Activated T-helper 1 cell treated with anti-CD3 and anti-CD28 coated beads, Interleukin-12 subunit alpha, Interleukin-12 subunit beta, Interleukin-2, Interleukin-4 antibody, amounts not matched to agents 30 ng/mL and 10 ng/mL and 1 ng/mL, durations not matched to agents 14 hours and 24 hours and 36 hours (primary cell): ENCODE measurements at regions of chr12 and their contacts with region 1.

Region 1: DNA sequence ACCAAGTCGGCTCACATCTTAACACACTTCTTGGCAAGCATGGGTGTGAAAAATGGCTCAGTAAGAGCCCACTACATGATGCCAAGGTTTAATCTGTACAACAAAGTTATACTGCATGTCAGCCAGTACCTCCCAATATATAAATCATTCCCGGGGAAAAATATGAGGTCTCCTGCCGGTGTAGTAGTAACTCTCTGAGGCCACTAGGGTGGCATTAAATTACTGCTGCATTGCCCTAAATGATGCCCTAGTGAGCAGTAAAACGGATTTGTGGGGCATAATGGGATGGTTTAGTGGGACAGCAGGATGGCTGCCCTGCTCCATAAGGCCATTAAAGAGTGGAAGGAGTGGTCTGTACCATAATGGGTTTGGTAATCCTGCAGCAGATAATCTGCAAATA is 267.7 kb downstream of the MED13L start:
- DNase-seq: no peak
- H3K4me3 Mint-ChIP-seq: no peak overlapping the region
- H3K27ac Mint-ChIP-seq: no peak overlapping the region
- H3K4me1 Mint-ChIP-seq: no peaks in the 10 kb centered on the region
- H3K27me3 Mint-ChIP-seq: no peaks in the 10 kb centered on the region

Region 2: DNA sequence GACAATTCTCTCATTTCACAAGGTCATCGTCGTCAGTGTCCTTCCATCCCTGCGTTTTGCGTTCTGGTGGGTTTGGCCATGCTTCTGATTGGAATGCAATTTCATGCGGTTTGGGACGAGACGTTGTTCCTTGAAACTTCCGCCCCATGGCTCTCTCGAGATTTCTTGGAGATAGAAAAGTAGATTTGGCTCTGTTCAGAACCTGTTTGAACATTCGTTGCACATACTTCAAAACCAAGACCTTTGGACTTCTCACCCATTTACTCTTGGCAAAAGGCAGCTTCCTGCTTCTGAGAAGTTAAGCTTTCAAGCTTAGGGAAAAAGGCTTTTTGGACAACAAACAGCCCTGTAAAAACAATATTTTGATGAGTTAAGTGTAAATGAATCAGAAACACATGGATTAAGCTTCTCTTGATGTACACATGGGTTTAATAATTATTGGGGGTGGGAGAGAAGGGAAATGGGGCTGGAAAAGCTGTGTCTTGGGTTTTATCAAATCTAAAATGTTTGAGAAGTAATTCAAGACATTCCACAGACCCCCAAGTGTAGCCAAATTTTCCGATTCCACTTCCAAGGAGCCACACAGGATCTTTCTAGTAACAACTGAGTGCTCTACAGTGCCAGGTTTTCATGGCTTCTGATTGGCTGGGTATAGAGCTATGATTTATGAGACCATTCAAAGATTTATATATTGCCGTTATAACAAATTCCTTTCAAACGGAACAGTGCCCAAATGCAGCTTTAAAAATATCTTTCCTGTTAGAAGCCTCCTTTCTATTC is 199.5 kb before region 1 on chr12:
- intact Hi-C with region 1: no loop called
- DNase-seq: no peak
- H3K4me3 Mint-ChIP-seq: no peak overlapping the region
- H3K27ac Mint-ChIP-seq: no peak overlapping the region
- H3K4me1 Mint-ChIP-seq: no peaks in the 10 kb centered on the region
- H3K27me3 Mint-ChIP-seq: no peaks in the 10 kb centered on the region

Region 3: DNA sequence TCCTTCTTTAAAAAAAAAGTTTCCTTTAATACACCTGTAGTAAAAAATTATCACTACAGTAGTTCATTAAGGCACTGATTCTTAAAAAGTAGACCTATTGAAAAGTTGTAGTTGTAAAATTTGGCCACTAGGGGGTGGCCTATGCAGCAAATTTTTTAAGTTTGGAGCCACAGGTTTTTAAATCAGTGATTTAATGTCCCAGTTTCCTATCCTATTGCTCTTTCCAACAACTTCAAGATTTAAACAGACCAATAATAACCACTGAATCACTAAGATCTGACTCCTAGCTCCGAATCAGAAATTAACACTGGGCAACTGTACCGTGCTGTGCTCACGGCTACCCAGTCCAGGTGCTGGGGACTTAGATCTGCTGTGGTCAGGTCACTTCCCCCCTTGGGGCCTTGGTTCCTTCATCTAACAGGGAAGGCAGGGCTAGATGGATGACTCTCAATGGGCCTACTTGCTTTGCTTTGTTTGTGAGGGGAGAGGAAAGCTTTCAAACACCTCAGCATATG is 11.6 kb before region 1 on chr12:
- intact Hi-C with region 1: no loop called
- DNase-seq: no peak
- H3K4me3 Mint-ChIP-seq: no peak overlapping the region
- H3K27ac Mint-ChIP-seq: no peak overlapping the region
- H3K4me1 Mint-ChIP-seq: no peaks in the 10 kb centered on the region
- H3K27me3 Mint-ChIP-seq: no peaks in the 10 kb centered on the region

Region 4: GRCh38 chr12:116043659-116044535 is 34.1 kb after region 1 on chr12:
- intact Hi-C with region 1: loop called (anchors 1 kb)
- DNase-seq: no peak
- H3K4me3 Mint-ChIP-seq: no peak overlapping the region
- H3K27ac Mint-ChIP-seq: no peak overlapping the region
- H3K4me1 Mint-ChIP-seq: peaks cover 8% of the 10 kb centered on the region
- H3K27me3 Mint-ChIP-seq: peaks cover 3% of the 10 kb centered on the region

Region 5: DNA sequence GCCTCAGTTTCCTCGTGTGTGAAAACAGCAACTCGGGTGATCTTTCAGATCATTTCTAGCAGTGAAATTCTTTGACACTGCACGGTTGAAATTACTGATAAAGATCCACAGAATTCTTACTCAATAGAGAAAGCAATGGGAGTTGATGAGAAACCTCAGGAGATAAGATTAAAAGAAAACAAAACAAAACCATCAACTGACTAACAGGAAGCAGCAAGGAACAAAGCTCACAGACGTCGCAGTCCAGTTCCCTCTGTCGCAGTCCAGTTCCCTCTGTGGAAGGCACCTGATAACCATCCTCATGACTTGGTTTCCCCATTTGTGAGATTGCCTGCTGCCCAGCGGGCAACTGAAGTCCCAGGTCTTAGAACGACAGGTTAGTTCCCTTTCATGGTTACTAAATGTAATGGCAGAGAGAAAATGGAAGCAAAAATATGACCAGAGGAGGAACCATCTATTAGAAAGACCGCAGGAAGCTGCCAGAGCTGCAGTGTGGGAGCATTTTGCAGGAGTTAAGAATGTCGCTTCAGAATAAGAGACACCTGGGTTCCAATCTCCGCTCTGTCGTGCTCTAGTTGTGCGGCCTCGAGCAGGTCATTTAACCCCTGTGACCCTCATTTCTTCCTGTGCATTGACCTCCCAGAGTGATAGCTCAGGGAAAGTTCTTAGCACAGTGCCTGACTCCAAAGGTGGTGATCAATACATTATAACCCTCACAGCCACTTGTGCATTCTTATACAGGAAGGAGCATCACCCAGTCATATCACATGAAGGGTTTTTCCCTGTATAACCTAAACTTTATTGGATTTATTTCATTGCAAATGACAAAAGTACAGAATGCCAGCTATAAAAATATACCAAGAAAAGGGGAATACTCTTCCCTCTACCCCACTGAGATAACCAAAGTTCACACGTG is 272.8 kb after region 1 on chr12:
- intact Hi-C with region 1: no loop called
- DNase-seq: no peak
- H3K4me3 Mint-ChIP-seq: peak overlapping the region; percentile 67
- H3K27ac Mint-ChIP-seq: peak overlapping the region; percentile 34
- H3K4me1 Mint-ChIP-seq: peaks cover 36% of the 10 kb centered on the region
- H3K27me3 Mint-ChIP-seq: peaks cover 8% of the 10 kb centered on the region